H1 (cell line): ENCODE measurements at regions of chr6 and their contacts with region 1.

Region 1: GRCh38 chr6:26122793-26123674 is 35.8 kb downstream of the HFE start:
- DNase-seq: peak; percentile 84 to 95
- H3K4me3 ChIP-seq: peak overlapping the region; percentile 82 to 100 (median 98)
- H3K27ac ChIP-seq: peak overlapping the region; percentile 91
- H3K4me1 ChIP-seq: peaks cover 1 to 9% (median 4%) of the 10 kb centered on the region in 4 experiments; a peak in 4 of 7 replicates
- H3K27me3 ChIP-seq: no peaks in the 10 kb centered on the region
- CTCF ChIP-seq: no peak
- EP300 ChIP-seq: peak in 1 of 2 experiments; percentile 98; a peak in 2 of 3 replicates
- POLR2A ChIP-seq: peak; percentile 96 to 97
- RAD21 ChIP-seq: no peak

Region 2: DNA sequence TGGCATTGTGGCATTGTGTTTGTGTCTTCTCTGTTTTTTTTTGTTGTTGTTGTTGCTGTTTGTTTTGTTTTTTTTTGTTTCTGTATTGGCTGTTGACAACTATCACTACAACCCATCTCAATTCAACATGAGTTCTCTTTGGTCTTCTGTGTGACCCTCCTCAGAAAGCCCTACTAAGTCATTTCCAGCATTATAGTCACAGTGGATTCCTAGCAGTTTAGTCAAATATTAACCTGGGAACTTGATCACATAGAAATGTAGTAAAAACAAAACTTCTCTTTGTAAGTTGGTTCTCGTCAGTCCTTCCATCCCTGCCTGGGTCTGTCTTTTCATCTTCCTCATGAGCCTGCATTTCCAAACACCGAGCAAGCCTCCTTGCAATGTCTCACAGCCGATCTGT is 209.3 kb before region 1 on chr6:
- CTCF ChIA-PET with region 1: no interaction called
- POLR2A ChIA-PET with region 1: no interaction called
- DNase-seq: no peak
- H3K4me3 ChIP-seq: no peak overlapping the region
- H3K27ac ChIP-seq: no peak overlapping the region
- H3K4me1 ChIP-seq: no peaks in the 10 kb centered on the region
- H3K27me3 ChIP-seq: no peaks in the 10 kb centered on the region
- CTCF ChIP-seq: no peak
- EP300 ChIP-seq: no peak
- POLR2A ChIP-seq: no peak
- RAD21 ChIP-seq: no peak

Region 3: GRCh38 chr6:26065952-26066380 is 57.1 kb before region 1 on chr6:
- CTCF ChIA-PET with region 1: interaction called, 3 read pairs
- POLR2A ChIA-PET with region 1: interaction called, 114 read pairs
- DNase-seq: no peak
- H3K4me3 ChIP-seq: no peak overlapping the region
- H3K27ac ChIP-seq: no peak overlapping the region
- H3K4me1 ChIP-seq: no peaks in the 10 kb centered on the region
- H3K27me3 ChIP-seq: no peaks in the 10 kb centered on the region
- CTCF ChIP-seq: peak; percentile 22 to 88 (median 77)
- EP300 ChIP-seq: no peak
- POLR2A ChIP-seq: no peak
- RAD21 ChIP-seq: peak; percentile 87 to 92

Region 4: DNA sequence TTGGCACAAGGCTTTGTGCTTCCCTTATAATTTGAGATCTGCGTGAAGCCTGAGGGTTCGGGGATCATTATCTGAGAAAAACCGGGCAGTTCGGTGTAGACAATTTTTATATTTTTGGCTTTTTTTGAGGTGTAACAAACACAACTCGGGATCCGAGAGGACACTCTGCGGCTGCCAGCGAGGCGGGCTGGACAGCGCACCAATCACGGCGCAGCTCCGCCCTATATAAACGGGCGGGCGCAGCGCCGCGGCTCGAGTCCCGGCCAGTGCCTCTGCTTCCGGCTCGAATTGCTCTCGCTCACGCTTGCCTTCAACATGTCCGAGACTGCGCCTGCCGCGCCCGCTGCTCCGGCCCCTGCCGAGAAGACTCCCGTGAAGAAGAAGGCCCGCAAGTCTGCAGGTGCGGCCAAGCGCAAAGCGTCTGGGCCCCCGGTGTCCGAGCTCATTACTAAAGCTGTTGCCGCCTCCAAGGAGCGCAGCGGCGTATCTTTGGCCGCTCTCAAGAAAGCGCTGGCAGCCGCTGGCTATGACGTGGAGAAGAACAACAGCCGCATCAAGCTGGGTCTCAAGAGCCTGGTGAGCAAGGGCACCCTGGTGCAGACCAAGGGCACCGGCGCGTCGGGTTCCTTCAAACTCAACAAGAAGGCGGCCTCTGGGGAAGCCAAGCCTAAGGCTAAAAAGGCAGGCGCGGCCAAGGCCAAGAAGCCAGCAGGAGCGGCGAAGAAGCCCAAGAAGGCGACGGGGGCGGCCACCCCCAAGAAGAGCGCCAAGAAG is 33.2 kb after region 1 on chr6:
- CTCF ChIA-PET with region 1: interaction called, 6 read pairs
- POLR2A ChIA-PET with region 1: interaction called, 1,244 read pairs
- DNase-seq: peak; percentile 67 to 95
- H3K4me3 ChIP-seq: peak overlapping the region; percentile 90 to 100 (median 92)
- H3K27ac ChIP-seq: peak overlapping the region; percentile 97
- H3K4me1 ChIP-seq: peaks cover 0 to 3% (median 3%) of the 10 kb centered on the region in 4 experiments; a peak in 5 of 7 replicates
- H3K27me3 ChIP-seq: no peaks in the 10 kb centered on the region
- CTCF ChIP-seq: no peak
- EP300 ChIP-seq: no peak
- POLR2A ChIP-seq: peak; percentile 87 to 97
- RAD21 ChIP-seq: 0 out of 4 replicates have a peak, but pooled peaks have one; percentile 2 to 9

Region 5: GRCh38 chr6:26223650-26224546 is 100.9 kb after region 1 on chr6:
- CTCF ChIA-PET with region 1: no interaction called
- POLR2A ChIA-PET with region 1: interaction called, 132 read pairs
- DNase-seq: no peak
- H3K4me3 ChIP-seq: peak overlapping the region; percentile 61 to 94 (median 76)
- H3K27ac ChIP-seq: peak overlapping the region; percentile 91
- H3K4me1 ChIP-seq: peaks cover 0 to 7% (median 3%) of the 10 kb centered on the region in 4 experiments; a peak in 5 of 7 replicates
- H3K27me3 ChIP-seq: no peaks in the 10 kb centered on the region
- CTCF ChIP-seq: no peak
- EP300 ChIP-seq: no peak
- POLR2A ChIP-seq: peak; percentile 48 to 76; a peak in 2 of 3 replicates
- RAD21 ChIP-seq: no peak

Region 6: DNA sequence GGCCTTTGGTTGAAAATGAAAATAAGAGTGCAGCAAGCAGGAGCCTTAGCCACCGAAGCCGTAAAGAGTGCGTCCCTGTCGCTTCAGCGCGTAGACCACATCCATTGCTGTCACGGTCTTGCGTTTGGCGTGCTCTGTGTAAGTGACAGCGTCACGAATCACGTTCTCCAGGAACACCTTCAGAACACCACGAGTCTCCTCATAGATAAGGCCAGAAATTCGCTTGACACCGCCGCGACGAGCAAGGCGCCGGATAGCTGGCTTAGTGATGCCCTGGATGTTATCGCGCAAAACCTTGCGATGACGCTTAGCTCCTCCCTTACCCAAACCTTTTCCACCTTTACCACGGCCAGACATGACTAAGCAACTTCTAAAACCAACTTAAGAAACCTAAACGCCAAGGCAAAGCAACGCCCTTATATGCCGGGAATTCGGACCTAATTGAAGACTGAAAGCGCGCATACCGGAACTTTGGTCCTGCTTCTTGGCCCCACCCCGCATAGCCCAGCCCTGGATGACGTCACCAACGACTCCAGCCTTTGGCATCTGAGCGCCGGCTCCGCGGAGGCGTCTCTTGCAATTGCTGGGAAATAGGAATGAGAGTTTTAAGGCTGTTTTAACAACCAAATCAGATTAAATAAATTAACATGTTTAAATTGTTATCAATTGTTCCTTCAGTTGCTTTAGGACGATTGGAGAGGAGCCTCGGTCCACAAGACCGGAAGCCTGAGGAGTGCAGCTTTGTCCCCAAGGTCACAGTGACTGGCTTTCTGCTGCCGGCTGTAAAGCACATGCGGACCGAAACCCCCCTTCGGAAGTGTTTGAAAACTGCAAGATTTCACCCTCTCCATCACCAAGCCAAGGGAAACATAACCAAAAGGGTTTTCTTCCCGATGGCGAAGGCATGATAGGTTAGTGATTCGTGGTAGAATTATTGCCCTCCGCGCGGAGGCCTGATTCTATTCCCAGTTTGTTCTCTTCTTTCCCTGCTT is 162.4 kb after region 1 on chr6:
- CTCF ChIA-PET with region 1: no interaction called
- POLR2A ChIA-PET with region 1: interaction called, 62 read pairs
- DNase-seq: peak; percentile 94 to 100
- H3K4me3 ChIP-seq: peak overlapping the region; percentile 74 to 95 (median 80)
- H3K27ac ChIP-seq: peak overlapping the region; percentile 96
- H3K4me1 ChIP-seq: peaks cover 0 to 7% (median 2%) of the 10 kb centered on the region in 4 experiments; a peak in 1 of 7 replicates
- H3K27me3 ChIP-seq: no peaks in the 10 kb centered on the region
- CTCF ChIP-seq: no peak
- EP300 ChIP-seq: peak in 1 of 2 experiments; percentile 97; a peak in 2 of 3 replicates
- POLR2A ChIP-seq: peak; percentile 100
- RAD21 ChIP-seq: no peak

Region 7: GRCh38 chr6:27825025-27825793 is 1702.2 kb after region 1 on chr6:
- CTCF ChIA-PET with region 1: no interaction called
- POLR2A ChIA-PET with region 1: interaction called, 11 read pairs
- DNase-seq: no peak
- H3K4me3 ChIP-seq: peak overlapping the region; percentile 59 to 90 (median 81)
- H3K27ac ChIP-seq: peak overlapping the region; percentile 95; the same call in 1 of the 2 replicates
- H3K4me1 ChIP-seq: peaks cover 0 to 3% (median 0%) of the 10 kb centered on the region in 4 experiments; a peak in 1 of 7 replicates
- H3K27me3 ChIP-seq: no peaks in the 10 kb centered on the region
- CTCF ChIP-seq: no peak
- EP300 ChIP-seq: no peak
- POLR2A ChIP-seq: peak in 1 of 2 experiments; percentile 32; a peak in 2 of 3 replicates
- RAD21 ChIP-seq: no peak